ENCODE measurements at regions of chr2 and their contacts with region 1.

Region 1: GRCh38 chr2:38508311-38509039 is 94.3 kb downstream of the HNRNPLL start:
- DNase-seq: peak; percentile 83 to 87
- H3K4me3 ChIP-seq: no peak overlapping the region
- H3K27ac ChIP-seq: peak overlapping the region; percentile 61 to 78
- H3K4me1 ChIP-seq: peaks cover 0 to 18% of the 10 kb centered on the region in 2 donors
- H3K27me3 ChIP-seq: no peaks in the 10 kb centered on the region
- CTCF ChIP-seq: peak in 2 of 3 donors; percentile 7 to 10
- POLR2A ChIP-seq: no peak

Region 2: DNA sequence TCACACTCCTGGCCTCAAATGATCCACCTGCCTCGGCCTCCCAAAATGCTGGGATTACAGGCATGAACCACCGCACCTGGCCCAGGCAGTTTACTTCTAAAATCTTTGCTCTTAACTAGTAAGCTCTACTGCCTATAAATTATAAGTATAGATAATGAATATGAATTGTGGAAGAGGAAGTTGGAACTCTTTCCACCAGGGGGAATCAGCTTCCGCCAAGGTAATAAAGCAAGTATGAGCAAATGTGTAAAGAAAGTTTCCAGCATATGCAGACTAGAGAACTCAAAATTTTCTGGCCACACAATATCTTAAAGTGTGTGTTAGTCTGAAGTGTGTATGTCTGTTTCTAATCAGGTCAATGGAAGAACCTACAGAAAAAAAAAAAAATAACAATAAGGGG is 515.3 kb before region 1 on chr2:
- intact Hi-C with region 1: loop called (anchors 5 kb)
- DNase-seq: no peak
- H3K4me3 ChIP-seq: no peak overlapping the region
- H3K27ac ChIP-seq: no peak overlapping the region
- H3K4me1 ChIP-seq: no peaks in the 10 kb centered on the region
- H3K27me3 ChIP-seq: no peaks in the 10 kb centered on the region
- CTCF ChIP-seq: no peak
- POLR2A ChIP-seq: no peak

Region 3: GRCh38 chr2:38454081-38454480 is 54.4 kb before region 1 on chr2:
- intact Hi-C with region 1: no loop called
- DNase-seq: no peak
- H3K4me3 ChIP-seq: no peak overlapping the region
- H3K27ac ChIP-seq: no peak overlapping the region
- H3K4me1 ChIP-seq: no peaks in the 10 kb centered on the region
- H3K27me3 ChIP-seq: no peaks in the 10 kb centered on the region
- CTCF ChIP-seq: no peak
- POLR2A ChIP-seq: no peak